Heart left ventricle (tissue), 16 donors: ENCODE measurements at regions of chr18 and their contacts with region 1.

Region 1: DNA sequence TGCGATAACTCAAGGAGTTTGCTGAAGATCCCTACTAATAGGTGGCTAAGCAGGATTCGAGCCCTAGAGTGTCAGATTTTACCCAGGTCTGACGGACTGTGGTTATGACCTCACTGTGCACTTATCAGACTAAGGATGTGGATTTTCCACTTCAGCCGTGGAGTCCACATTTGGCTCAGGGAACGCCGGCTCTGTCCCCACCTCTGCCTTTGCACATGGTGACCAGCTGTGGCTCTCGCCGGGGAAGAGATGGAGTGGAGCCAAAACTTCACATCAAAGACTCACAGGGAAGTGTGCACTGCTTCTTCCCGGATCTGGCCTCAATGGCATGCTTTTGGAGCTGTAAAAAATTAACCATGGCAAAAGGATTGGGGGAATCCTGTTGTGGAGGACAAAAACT is 249.3 kb upstream of the APCDD1 start:
- DNase-seq: peak in 4 of 5 donors; percentile 32 to 54 (median 40)
- ATAC-seq: peak in 3 of 4 donors; percentile 66 to 85 (median 76)
- H3K4me3 ChIP-seq: no peak overlapping the region
- H3K27ac ChIP-seq: no peak overlapping the region
- H3K4me1 ChIP-seq: peaks cover 0 to 21% (median 5%) of the 10 kb centered on the region in 12 donors
- H3K27me3 ChIP-seq: no peaks in the 10 kb centered on the region
- CTCF ChIP-seq: no peak
- POLR2A ChIP-seq: no peak

Region 2: GRCh38 chr18:10131460-10132395 is 73.4 kb before region 1 on chr18:
- intact Hi-C with region 1: loop called in 1 of 10 experiments (anchors 10 kb)
- DNase-seq: peak in 4 of 5 donors; percentile 23 to 43 (median 34)
- ATAC-seq: peak; percentile 37 to 74 (median 70)
- H3K4me3 ChIP-seq: peak overlapping the region in 11 of 12 donors; percentile 15 to 50 (median 44)
- H3K27ac ChIP-seq: peak overlapping the region in 6 of 12 donors; percentile 10 to 69 (median 42)
- H3K4me1 ChIP-seq: peaks cover 0 to 25% (median 17%) of the 10 kb centered on the region in 12 donors
- H3K27me3 ChIP-seq: peaks cover 0 to 12% (median 0%) of the 10 kb centered on the region in 9 donors
- CTCF ChIP-seq: no peak
- POLR2A ChIP-seq: no peak

Region 3: GRCh38 chr18:10261302-10262276 is 56.4 kb after region 1 on chr18:
- intact Hi-C with region 1: loop called in 1 of 10 experiments (anchors 10 kb)
- DNase-seq: no peak
- ATAC-seq: peak in 2 of 4 donors; percentile 22 to 36
- H3K4me3 ChIP-seq: no peak overlapping the region
- H3K27ac ChIP-seq: no peak overlapping the region
- H3K4me1 ChIP-seq: peaks cover 0 to 38% (median 2%) of the 10 kb centered on the region in 12 donors
- H3K27me3 ChIP-seq: no peaks in the 10 kb centered on the region
- CTCF ChIP-seq: no peak
- POLR2A ChIP-seq: no peak